ENCODE measurements at regions of chr11 and their contacts with region 1.

Region 1: DNA sequence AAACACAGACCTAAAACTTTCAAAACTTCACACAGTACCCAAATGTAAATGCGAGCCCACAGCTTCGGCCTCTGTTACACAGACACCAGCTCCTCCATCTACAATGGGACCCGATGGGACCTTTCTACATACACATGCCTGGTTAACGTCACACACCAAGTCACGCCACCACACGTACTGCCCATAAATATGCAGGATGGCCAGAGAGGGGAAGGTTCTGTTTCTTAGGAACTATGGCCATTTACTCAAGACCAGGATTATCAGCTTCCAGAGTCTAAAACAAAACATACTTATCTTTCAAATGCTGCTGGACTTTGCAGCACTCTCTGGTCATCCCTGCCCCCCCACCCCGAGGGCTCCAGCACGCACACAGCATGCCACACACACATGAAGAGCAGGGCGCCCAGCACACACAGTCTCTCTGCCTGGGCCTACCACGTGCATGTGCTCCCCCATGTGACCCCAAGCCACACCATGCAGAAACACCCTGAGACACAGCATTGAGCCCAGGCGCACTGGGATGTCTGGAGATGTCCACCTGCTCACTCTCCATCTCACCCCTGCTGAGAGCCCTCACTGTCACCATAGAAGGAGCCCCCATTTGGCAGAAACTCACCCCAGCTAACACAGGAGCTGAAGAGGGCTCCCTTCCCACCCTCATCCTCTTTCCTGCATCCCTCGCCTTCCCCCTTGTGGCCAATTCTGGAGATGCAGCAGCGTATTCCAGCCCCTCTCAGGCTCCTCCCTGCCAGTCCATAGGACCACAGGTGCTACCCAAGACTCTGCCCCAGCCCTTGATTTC is 61.8 kb downstream of the SLC22A12 start:
- DNase-seq: peak; percentile 88
- H3K4me3 Mint-ChIP-seq: no peak overlapping the region
- H3K27ac Mint-ChIP-seq: no peak overlapping the region
- H3K4me1 Mint-ChIP-seq: no peaks in the 10 kb centered on the region
- H3K27me3 Mint-ChIP-seq: no peaks in the 10 kb centered on the region

Region 2: DNA sequence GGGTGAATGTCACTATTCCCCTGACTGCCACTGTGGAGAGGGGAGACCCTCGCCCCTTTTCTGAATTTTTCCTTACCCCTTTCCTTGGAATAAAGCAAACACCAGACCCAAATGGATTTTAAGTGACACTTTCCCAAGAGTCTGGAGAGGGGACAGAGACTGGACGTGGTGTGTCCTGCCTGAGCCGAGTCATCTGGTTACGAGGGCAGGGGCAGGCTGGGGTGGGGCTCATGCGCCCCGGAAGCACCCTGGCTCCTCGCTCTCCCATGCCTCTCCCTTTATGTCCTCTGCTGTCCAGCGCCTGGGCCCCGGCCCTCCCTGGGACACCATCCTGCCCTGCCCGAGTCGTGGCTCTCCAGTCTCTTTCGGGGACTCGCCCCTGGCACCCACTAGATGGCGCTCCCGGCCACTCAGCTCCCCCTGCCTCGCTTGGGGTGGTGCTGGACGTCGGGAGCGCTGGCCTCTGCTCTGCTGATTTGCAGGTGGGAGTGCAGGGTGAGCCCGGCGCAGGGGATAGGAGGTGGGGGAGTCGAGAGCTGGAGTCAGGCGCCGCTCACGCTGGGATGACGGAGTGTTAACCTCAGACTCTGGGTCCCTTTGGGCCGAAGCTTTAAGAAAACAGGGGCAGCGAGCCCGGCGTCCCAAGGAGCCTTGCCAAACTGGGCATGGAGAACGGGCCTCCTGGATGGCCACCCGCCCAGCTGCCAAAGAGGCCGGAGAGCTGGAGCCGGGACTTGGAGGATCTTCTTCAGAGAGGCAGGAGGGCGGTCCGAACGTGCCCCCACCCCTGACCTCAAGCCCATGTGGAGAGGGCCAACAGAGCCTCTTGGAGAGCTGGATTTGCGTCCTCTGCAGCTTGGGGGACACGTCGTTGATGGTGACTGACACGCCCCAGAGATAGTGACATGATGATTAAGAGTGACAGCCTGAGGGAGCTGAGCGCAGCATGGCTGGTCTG is 203.9 kb before region 1 on chr11:
- CTCF ChIA-PET with region 1: interaction called, 10 read pairs
- intact Hi-C with region 1: loop called (anchors 1 kb)
- DNase-seq: peak; percentile 84
- H3K4me3 Mint-ChIP-seq: peak overlapping the region; percentile 65
- H3K27ac Mint-ChIP-seq: no peak overlapping the region
- H3K4me1 Mint-ChIP-seq: peaks cover 17% of the 10 kb centered on the region
- H3K27me3 Mint-ChIP-seq: peaks cover 12% of the 10 kb centered on the region

Region 3: DNA sequence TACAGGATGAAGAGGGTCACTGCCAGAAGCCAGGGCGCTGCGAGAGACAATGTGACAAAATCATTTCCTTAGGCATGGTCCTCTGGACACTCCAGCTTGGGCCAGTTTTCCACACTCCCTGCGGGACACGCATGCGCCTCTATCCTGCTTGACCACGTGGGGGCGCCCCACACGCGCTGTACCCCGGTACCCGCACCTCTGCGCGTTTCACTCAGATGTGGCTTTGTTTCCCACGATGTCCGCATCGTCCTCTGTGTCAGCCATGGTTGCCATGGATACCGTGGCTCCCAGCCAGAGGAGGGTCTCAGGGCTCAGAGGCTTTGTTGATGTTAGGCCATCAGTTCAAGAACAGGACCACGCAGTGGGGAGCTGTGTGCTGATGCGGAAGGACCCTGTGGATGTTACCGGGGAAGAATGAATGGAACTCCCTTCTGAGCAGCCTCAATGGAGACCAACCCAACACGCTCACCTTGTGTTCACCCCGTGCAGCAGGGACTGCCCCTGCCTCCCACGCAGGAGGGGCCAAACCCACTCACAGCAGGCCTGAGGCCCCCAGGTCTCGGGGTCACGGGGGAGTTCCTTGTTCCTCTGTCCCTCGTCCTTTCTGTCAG is 162.9 kb before region 1 on chr11:
- CTCF ChIA-PET with region 1: interaction called, 5 read pairs
- intact Hi-C with region 1: loop called (anchors 1 kb)
- DNase-seq: peak; percentile 64
- H3K4me3 Mint-ChIP-seq: no peak overlapping the region
- H3K27ac Mint-ChIP-seq: no peak overlapping the region
- H3K4me1 Mint-ChIP-seq: peaks cover 14% of the 10 kb centered on the region
- H3K27me3 Mint-ChIP-seq: peaks cover 21% of the 10 kb centered on the region

Region 4: GRCh38 chr11:64553551-64554201 is 99.1 kb before region 1 on chr11:
- CTCF ChIA-PET with region 1: interaction called, 7 read pairs
- intact Hi-C with region 1: loop called (anchors 1 kb)
- DNase-seq: peak; percentile 64
- H3K4me3 Mint-ChIP-seq: no peak overlapping the region
- H3K27ac Mint-ChIP-seq: no peak overlapping the region
- H3K4me1 Mint-ChIP-seq: no peaks in the 10 kb centered on the region
- H3K27me3 Mint-ChIP-seq: no peaks in the 10 kb centered on the region

Region 5: GRCh38 chr11:64713031-64713780 is 60.4 kb after region 1 on chr11:
- CTCF ChIA-PET with region 1: no interaction called
- intact Hi-C with region 1: no loop called
- DNase-seq: no peak
- H3K4me3 Mint-ChIP-seq: no peak overlapping the region
- H3K27ac Mint-ChIP-seq: no peak overlapping the region
- H3K4me1 Mint-ChIP-seq: peaks cover 14% of the 10 kb centered on the region
- H3K27me3 Mint-ChIP-seq: peaks cover 66% of the 10 kb centered on the region

Region 6: DNA sequence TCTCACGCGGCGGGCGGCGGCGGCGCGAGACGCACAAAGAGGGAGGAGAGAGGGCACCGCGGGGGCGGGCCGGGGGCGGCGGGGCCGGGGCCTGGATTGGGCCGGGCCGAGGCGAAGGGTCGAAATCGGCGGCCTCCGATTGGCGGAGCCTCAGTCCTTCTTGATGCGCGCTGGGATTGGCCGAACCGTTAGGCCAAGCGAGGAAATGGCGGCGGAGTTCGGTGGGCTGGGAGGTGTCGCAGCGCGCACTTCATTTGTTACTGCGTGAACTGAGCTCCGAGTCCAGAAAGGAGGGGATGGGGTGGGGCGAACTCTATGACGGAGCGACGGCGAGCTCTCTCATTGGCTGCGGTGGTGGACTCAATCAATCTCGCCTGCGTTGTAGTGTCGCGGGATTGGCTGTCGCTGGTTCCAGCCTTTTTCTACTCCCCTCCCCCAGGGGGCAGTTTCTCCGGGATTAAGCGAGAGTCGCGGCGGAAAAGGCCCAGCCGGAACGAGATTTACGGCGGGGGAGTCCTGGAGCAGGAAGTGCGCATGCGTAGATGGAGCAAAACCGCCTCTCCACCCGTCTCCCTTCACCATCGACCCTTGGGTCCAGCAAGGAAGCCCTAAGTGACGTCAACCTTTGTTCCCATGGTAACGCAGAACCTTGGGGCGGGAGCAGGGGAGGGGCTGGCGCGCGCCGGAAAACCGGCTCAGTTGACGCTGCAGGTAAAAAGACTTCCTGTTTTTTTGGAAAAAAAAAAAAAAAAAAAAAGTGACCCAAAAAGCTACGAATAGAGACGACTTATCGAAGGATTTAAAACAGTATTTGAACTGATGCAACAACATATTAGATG is 125.9 kb after region 1 on chr11 and contains the start of gene SF1:
- CTCF ChIA-PET with region 1: no interaction called
- intact Hi-C with region 1: no loop called
- DNase-seq: peak; percentile 100
- H3K4me3 Mint-ChIP-seq: peak within 1 kb of the TSS; percentile 92
- H3K27ac Mint-ChIP-seq: peak within 1 kb of the TSS; percentile 99
- H3K4me1 Mint-ChIP-seq: peaks cover 52% of the 10 kb centered on the region
- H3K27me3 Mint-ChIP-seq: no peaks in the 10 kb centered on the region
- total RNA-seq, gene SF1: 303 to 320 TPM